ENCODE measurements at regions of chr14 and their contacts with region 1.

Region 1: GRCh38 chr14:50830932-50831725 is at the start of gene NIN:
- DNase-seq: peak; percentile 87
- H3K4me3 ChIP-seq: peak within 1 kb of the TSS; percentile 71
- H3K27ac ChIP-seq: peak within 1 kb of the TSS; percentile 74
- H3K4me1 ChIP-seq: peaks cover 66% of the 10 kb centered on the region
- CTCF ChIP-seq: no peak
- total RNA-seq, gene NIN: 79.5 and 95.3 TPM in 2 replicates

Region 2: GRCh38 chr14:50813544-50813863 is 17.6 kb before region 1 on chr14:
- CTCF ChIA-PET with region 1: interaction called, 4 read pairs
- POLR2A ChIA-PET with region 1: interaction called, 10 read pairs
- intact Hi-C with region 1: no loop called
- DNase-seq: peak; percentile 70
- H3K4me3 ChIP-seq: peak overlapping the region; percentile 50
- H3K27ac ChIP-seq: peak overlapping the region; percentile 74
- H3K4me1 ChIP-seq: peaks cover 37% of the 10 kb centered on the region
- CTCF ChIP-seq: no peak

Measured in OCI-LY7 (cell line).